Naive thymus-derived CD4-positive, alpha-beta T cell (primary cell): ENCODE measurements at regions of chr12 and their contacts with region 1.

Region 1: GRCh38 chr12:11648831-11649702 is at the start of gene ETV6:
- DNase-seq: peak; percentile 51 to 85 (median 79)
- ATAC-seq: peak; percentile 73
- H3K4me3 ChIP-seq: peak within 1 kb of the TSS; percentile 92
- H3K4me3 Mint-ChIP-seq: peak within 1 kb of the TSS; percentile 82 to 99 (median 98)
- H3K27ac ChIP-seq: peak within 1 kb of the TSS; percentile 90
- H3K27ac Mint-ChIP-seq: peak within 1 kb of the TSS; percentile 91 to 99 (median 97)
- H3K4me1 ChIP-seq: peaks cover 6 to 22% of the 10 kb centered on the region in 2 donors
- H3K4me1 Mint-ChIP-seq: peaks cover 24 to 49% (median 36%) of the 10 kb centered on the region in 7 donors
- H3K27me3 ChIP-seq: no peaks in the 10 kb centered on the region
- H3K27me3 Mint-ChIP-seq: no peaks in the 10 kb centered on the region
- total RNA-seq, gene ETV6: 24.2 to 70.3 (median 38.0) TPM

Region 2: DNA sequence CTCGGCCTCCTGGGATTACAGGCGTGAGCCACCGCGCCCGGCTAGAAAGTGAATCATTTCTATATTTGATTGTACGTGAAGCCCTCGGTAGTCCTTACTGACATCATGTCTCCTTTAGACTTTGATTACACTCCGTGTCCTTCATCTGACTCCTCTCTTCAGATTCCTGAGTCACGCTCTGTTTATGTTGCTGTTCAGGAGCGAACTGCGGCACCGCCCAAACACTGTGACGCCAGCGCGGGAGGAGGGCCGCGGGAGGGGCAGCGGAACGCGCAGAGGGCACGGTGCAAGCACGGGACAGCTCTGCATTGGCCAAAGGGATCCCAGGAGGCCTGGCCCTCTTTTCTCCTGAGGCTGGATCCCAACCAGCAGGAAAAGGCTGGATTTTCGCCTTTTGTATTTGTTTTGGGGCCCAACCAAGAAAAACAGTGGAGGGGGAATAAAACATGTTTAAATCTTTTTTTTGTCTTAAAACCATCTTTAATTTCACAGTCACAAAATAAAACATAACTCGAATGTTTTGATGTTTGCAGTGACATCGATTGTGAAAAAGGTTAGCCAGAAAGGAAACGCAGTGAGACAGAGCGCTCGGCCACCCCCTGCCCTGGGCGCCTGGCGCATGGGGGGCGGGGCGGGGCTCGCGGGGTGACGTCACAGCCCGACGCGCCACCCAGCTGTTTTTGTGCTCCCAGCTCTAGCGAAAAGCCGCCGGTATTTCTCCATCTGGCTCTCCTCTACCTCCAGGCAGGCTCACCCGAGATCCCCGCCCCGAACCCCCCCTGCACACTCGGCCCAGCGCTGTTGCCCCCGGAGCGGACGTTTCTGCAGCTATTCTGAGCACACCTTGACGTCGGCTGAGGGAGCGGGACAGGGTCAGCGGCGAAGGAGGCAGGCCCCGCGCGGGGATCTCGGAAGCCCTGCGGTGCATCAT is 1436.6 kb before region 1 on chr12 and contains the start of gene GABARAPL1:
- CTCF ChIA-PET with region 1: no interaction called
- POLR2A ChIA-PET with region 1: no interaction called
- intact Hi-C with region 1: loop called in 1 of 2 experiments (anchors 5 kb)
- DNase-seq: peak; percentile 77 to 90 (median 85)
- ATAC-seq: peak; percentile 85
- H3K4me3 ChIP-seq: peak within 1 kb of the TSS; percentile 91
- H3K4me3 Mint-ChIP-seq: peak within 1 kb of the TSS; percentile 94 to 98 (median 96)
- H3K27ac ChIP-seq: peak within 1 kb of the TSS; percentile 84
- H3K27ac Mint-ChIP-seq: peak within 1 kb of the TSS; percentile 91 to 99 (median 96)
- H3K4me1 ChIP-seq: peaks cover 12 to 22% of the 10 kb centered on the region in 2 donors
- H3K4me1 Mint-ChIP-seq: peaks cover 14 to 31% (median 25%) of the 10 kb centered on the region in 7 donors
- H3K27me3 ChIP-seq: no peaks in the 10 kb centered on the region
- H3K27me3 Mint-ChIP-seq: peaks cover 0 to 37% (median 0%) of the 10 kb centered on the region in 5 donors
- total RNA-seq, gene GABARAPL1: 3.7 to 165 (median 29.4) TPM

Region 3: DNA sequence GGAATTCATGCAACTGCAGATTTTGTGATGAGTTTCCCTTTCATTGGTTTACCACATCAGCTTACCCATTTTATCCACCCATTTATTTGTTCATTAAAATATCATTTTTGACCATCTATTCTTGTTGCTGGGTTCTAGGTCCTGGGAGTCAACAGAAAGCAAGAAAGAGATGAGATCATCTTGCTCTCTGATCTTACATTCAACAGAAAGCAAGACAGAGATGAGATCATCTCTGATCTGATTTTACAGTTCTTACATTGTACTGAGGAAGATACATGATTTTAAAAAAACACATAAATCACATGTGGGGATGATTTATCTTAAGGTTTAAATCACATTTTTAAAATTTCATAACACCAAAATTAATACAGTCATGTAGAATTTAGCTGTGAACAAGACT is 589.3 kb before region 1 on chr12:
- CTCF ChIA-PET with region 1: no interaction called
- POLR2A ChIA-PET with region 1: no interaction called
- intact Hi-C with region 1: no loop called
- DNase-seq: no peak
- ATAC-seq: no peak
- H3K4me3 ChIP-seq: no peak overlapping the region
- H3K4me3 Mint-ChIP-seq: no peak overlapping the region
- H3K27ac ChIP-seq: no peak overlapping the region
- H3K27ac Mint-ChIP-seq: no peak overlapping the region
- H3K4me1 ChIP-seq: no peaks in the 10 kb centered on the region
- H3K4me1 Mint-ChIP-seq: peaks cover 0 to 24% (median 17%) of the 10 kb centered on the region in 7 donors
- H3K27me3 ChIP-seq: no peaks in the 10 kb centered on the region
- H3K27me3 Mint-ChIP-seq: no peaks in the 10 kb centered on the region

Region 4: GRCh38 chr12:11581179-11581755 is 67.8 kb before region 1 on chr12:
- CTCF ChIA-PET with region 1: no interaction called
- POLR2A ChIA-PET with region 1: no interaction called
- intact Hi-C with region 1: loop called (anchors 2 to 5 kb)
- DNase-seq: peak; percentile 22 to 73 (median 64)
- ATAC-seq: peak; percentile 60
- H3K4me3 ChIP-seq: no peak overlapping the region
- H3K4me3 Mint-ChIP-seq: peak overlapping the region in 1 of 10 donors; percentile 65
- H3K27ac ChIP-seq: no peak overlapping the region
- H3K27ac Mint-ChIP-seq: peak overlapping the region in 2 of 9 donors; percentile 28 to 88
- H3K4me1 ChIP-seq: no peaks in the 10 kb centered on the region
- H3K4me1 Mint-ChIP-seq: peaks cover 0 to 10% (median 4%) of the 10 kb centered on the region in 7 donors
- H3K27me3 ChIP-seq: no peaks in the 10 kb centered on the region
- H3K27me3 Mint-ChIP-seq: peaks cover 0 to 14% (median 0%) of the 10 kb centered on the region in 5 donors

Region 5: GRCh38 chr12:11765817-11766794 is 117.0 kb after region 1 on chr12:
- CTCF ChIA-PET with region 1: interaction called, 4 read pairs
- POLR2A ChIA-PET with region 1: no interaction called
- intact Hi-C with region 1: loop called (anchors 1 to 5 kb)
- DNase-seq: peak in 4 of 9 donors; percentile 13 to 69 (median 32)
- ATAC-seq: peak; percentile 77
- H3K4me3 ChIP-seq: peak overlapping the region; percentile 12
- H3K4me3 Mint-ChIP-seq: peak overlapping the region; percentile 51 to 93 (median 70)
- H3K27ac ChIP-seq: peak overlapping the region; percentile 36
- H3K27ac Mint-ChIP-seq: peak overlapping the region; percentile 30 to 87 (median 74)
- H3K4me1 ChIP-seq: peaks cover 24 to 33% of the 10 kb centered on the region in 2 donors
- H3K4me1 Mint-ChIP-seq: peaks cover 57 to 96% (median 81%) of the 10 kb centered on the region in 7 donors
- H3K27me3 ChIP-seq: no peaks in the 10 kb centered on the region
- H3K27me3 Mint-ChIP-seq: no peaks in the 10 kb centered on the region

Region 6: DNA sequence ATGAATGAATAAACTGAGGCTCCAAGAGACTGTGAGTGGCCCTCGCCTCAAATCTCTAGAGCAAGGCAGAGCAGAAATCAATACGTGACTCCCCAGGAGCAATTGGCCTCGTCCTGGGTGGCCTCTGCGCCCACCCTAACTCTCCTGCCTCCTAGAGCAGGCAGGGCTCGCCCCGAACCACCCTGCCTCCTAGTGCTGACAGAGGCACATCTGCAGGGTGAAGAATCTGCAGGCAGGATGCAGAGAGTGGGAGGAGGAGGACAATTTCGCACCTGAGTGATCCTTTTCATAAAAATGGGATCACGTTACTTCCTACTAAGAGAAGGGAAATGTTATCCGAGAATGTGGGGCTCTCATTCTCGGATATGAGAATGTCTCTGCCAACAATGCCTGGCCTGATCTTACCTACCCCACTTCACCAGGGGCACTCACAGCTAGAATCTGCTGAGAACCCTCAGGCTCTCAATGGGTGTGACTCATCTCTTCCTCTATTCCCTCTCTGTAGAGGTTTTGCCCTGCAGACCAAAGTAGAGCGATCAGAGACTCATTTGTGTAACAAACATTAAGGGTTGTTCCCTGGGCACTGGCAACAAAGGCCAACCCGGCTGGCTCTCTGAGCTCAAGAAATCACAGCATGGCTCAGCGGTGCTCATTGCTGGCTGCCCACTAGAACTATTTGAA is 360.0 kb after region 1 on chr12:
- CTCF ChIA-PET with region 1: interaction called, 5 read pairs
- POLR2A ChIA-PET with region 1: interaction called, 8 read pairs
- intact Hi-C with region 1: loop called (anchors 1 kb)
- DNase-seq: peak in 7 of 9 donors; percentile 31 to 67 (median 36)
- ATAC-seq: peak; percentile 67
- H3K4me3 ChIP-seq: peak overlapping the region; percentile 15
- H3K4me3 Mint-ChIP-seq: peak overlapping the region; percentile 74 to 88 (median 82)
- H3K27ac ChIP-seq: peak overlapping the region; percentile 16
- H3K27ac Mint-ChIP-seq: peak overlapping the region; percentile 83 to 96 (median 90)
- H3K4me1 ChIP-seq: peaks cover 44 to 53% of the 10 kb centered on the region in 2 donors
- H3K4me1 Mint-ChIP-seq: peaks cover 53 to 88% (median 81%) of the 10 kb centered on the region in 7 donors
- H3K27me3 ChIP-seq: no peaks in the 10 kb centered on the region
- H3K27me3 Mint-ChIP-seq: peaks cover 0 to 9% (median 0%) of the 10 kb centered on the region in 5 donors

Region 7: DNA sequence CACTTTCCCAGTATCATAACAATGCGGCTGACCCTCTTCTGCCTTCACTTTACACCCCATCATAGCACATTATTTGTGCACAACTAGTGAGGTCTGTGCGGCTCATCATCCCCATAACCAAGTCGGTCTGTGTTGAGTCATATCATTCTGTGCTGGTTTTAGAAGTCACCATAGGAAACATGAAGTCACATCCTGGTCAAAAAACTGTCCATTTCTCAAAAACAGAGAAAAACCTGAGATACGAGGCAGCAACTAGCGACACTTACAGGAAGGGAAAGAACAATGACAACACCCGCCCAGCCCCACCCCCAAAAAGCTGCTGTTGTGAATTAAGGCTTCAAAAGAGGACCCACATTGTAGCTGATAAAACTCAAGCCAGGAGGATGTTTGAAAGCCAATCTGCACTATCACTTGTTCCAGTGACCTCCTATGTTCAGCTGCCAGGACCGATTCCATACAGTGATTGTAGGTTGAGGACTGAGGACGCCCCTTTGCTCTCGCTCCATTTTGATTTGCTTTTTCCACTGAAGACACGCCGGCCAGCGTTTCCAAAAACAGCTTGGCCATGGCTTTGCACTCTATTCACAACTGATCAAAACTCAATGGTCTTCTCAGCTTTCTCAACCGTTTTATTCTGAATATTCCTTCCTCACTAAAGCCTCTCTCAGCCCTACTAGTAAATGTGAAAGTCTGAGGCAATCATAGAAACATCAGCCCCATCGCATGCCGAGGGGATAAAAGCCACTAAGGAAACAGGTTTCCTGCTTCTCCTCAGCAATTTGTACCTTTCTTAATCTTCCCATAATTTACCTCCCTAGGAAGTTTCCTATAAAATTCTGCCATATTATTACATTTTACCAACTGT is 826.1 kb after region 1 on chr12:
- CTCF ChIA-PET with region 1: no interaction called
- POLR2A ChIA-PET with region 1: no interaction called
- intact Hi-C with region 1: loop called in 1 of 2 experiments (anchors 2 kb)
- DNase-seq: peak in 3 of 9 donors; percentile 22 to 49 (median 37)
- ATAC-seq: peak; percentile 84
- H3K4me3 ChIP-seq: peak overlapping the region; percentile 7
- H3K4me3 Mint-ChIP-seq: peak overlapping the region in 9 of 10 donors; percentile 11 to 76 (median 43)
- H3K27ac ChIP-seq: peak overlapping the region; percentile 39
- H3K27ac Mint-ChIP-seq: peak overlapping the region; percentile 72 to 95 (median 91)
- H3K4me1 ChIP-seq: peaks cover 7 to 17% of the 10 kb centered on the region in 2 donors
- H3K4me1 Mint-ChIP-seq: peaks cover 10 to 72% (median 42%) of the 10 kb centered on the region in 7 donors
- H3K27me3 ChIP-seq: no peaks in the 10 kb centered on the region
- H3K27me3 Mint-ChIP-seq: no peaks in the 10 kb centered on the region